K562 (cell line): ENCODE measurements at regions of chr2 and their contacts with region 1.

Region 1: DNA sequence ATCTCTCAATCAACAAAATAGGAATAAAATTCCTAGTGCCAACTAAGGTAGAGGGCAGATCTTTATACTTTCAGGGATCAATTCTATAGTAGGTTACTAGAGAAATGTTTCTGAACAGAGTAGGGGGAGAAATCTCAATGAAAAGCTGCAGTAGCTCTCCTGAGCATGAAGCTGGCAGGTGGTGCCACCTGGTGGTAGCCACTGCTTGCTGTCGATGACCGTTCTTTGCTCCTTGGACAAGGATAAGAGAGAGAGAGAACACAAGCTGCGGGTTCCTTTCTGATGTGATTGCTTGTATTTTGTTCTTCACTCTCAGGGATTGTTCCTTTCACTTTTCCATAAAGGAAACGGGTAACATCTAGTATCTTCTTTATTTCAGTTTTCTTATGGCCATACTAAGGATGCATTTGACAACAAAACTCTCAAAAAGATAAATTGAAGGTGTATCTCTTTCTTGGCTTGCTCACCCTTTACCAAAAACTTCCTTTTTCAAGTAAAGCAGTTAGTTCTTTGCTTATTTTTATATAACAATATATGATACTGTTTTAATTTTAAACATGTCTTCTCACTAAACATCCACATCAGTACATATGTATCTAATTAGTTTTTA is 18.6 kb upstream of the MRPL19 start:
- DNase-seq: peak; percentile 59 to 79 (median 66)
- ATAC-seq: peak; percentile 95
- H3K4me3 ChIP-seq: no peak overlapping the region
- H3K27ac ChIP-seq: no peak overlapping the region
- H3K4me1 ChIP-seq: no peaks in the 10 kb centered on the region
- H3K27me3 ChIP-seq: peaks cover 2 to 11% of the 10 kb centered on the region in 2 experiments; a peak in 3 of 5 replicates
- CTCF ChIP-seq: peak; percentile 82 to 88 (median 84)
- EP300 ChIP-seq: no peak
- POLR2A ChIP-seq: no peak
- RAD21 ChIP-seq: peak; percentile 40 to 73

Region 2: DNA sequence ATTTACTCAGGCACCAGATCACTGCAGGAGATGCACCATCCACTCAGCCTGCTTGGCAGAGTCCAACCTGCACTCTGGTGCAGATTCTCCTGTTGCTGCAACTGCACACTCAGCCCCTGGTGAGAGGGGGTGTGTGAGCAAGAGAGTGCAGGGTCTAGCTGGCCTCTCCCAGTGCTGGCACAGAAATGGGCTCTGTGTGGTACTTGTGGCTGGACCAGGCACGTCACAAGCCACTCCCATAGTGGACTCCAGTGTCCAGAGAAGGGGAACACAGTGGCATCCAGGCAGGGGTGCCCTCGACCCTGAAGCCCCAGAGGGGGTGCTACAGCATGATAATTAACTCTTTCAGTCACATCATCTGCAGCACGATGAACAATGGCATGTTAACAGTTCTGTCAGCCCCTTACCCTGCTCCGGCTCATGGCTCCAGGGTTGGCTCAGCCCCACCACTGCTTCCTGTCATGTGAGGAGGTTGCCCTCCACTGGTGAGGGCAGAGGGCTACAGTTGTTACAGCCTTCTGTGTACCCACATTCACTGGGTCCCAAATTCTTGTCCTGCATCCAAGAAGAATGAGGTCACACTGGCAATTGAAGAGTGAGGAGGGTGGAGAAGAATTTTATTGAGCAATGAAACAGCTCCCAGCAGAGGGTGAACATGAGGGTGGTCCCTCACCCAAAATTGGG is 202.9 kb before region 1 on chr2:
- CTCF ChIA-PET with region 1: no interaction called
- POLR2A ChIA-PET with region 1: no interaction called
- in situ Hi-C with region 1: no loop called
- intact Hi-C with region 1: no loop called
- DNase-seq: peak in 1 of 4 experiments; percentile 1
- ATAC-seq: peak; percentile 35; the same call in 1 of the 3 replicates
- H3K4me3 ChIP-seq: no peak overlapping the region
- H3K27ac ChIP-seq: no peak overlapping the region
- H3K4me1 ChIP-seq: no peaks in the 10 kb centered on the region
- H3K27me3 ChIP-seq: no peaks in the 10 kb centered on the region
- CTCF ChIP-seq: peak in 2 of 3 experiments; percentile 17 to 25; a peak in 1 of 6 replicates
- EP300 ChIP-seq: no peak
- POLR2A ChIP-seq: no peak
- RAD21 ChIP-seq: no peak

Region 3: GRCh38 chr2:75466708-75467311 is 161.2 kb before region 1 on chr2:
- CTCF ChIA-PET with region 1: interaction called, 7 read pairs
- POLR2A ChIA-PET with region 1: no interaction called
- in situ Hi-C with region 1: no loop called
- intact Hi-C with region 1: loop called (anchors 5 kb)
- DNase-seq: peak; percentile 54 to 68 (median 66)
- ATAC-seq: peak; percentile 86
- H3K4me3 ChIP-seq: no peak overlapping the region
- H3K27ac ChIP-seq: no peak overlapping the region
- H3K4me1 ChIP-seq: no peaks in the 10 kb centered on the region
- H3K27me3 ChIP-seq: no peaks in the 10 kb centered on the region
- CTCF ChIP-seq: peak; percentile 56 to 77 (median 74)
- EP300 ChIP-seq: no peak
- POLR2A ChIP-seq: no peak
- RAD21 ChIP-seq: peak in 1 of 2 experiments; percentile 51; a peak in 3 of 4 replicates

Region 4: GRCh38 chr2:75680402-75680801 is 52.4 kb after region 1 on chr2:
- CTCF ChIA-PET with region 1: no interaction called
- POLR2A ChIA-PET with region 1: no interaction called
- in situ Hi-C with region 1: no loop called
- intact Hi-C with region 1: no loop called
- DNase-seq: no peak
- ATAC-seq: no peak
- H3K4me3 ChIP-seq: no peak overlapping the region
- H3K27ac ChIP-seq: no peak overlapping the region
- H3K4me1 ChIP-seq: peaks cover 6 to 15% of the 10 kb centered on the region in 2 experiments; a peak in 4 of 5 replicates
- H3K27me3 ChIP-seq: no peaks in the 10 kb centered on the region
- CTCF ChIP-seq: no peak
- EP300 ChIP-seq: no peak
- POLR2A ChIP-seq: no peak
- RAD21 ChIP-seq: no peak

Region 5: DNA sequence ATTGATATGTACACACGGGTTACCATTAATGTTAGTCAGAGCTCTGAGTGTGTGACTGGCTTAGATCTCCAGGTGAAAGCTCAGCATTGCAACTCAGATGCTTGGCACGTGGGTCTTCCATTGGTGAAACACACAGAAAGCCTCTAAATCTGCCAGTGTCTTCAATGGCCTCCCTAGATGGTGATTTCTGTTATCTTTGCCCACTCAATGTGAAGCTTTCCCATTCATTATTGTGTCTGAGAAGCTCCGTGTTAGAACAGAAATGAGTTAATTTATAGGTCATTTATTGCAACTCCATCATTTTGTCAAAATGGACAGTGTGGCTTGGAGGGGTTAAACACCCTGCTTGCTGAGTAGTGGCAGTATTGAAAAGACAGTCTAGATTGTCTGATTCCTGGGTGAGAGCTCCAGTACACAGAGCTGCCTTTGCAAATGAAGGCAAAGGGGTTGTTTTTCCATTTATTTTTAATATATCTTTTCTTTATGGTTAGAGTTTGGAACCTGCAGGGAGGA is 147.4 kb after region 1 on chr2:
- CTCF ChIA-PET with region 1: no interaction called
- POLR2A ChIA-PET with region 1: no interaction called
- in situ Hi-C with region 1: no loop called
- intact Hi-C with region 1: no loop called
- DNase-seq: no peak
- ATAC-seq: no peak
- H3K4me3 ChIP-seq: no peak overlapping the region
- H3K27ac ChIP-seq: no peak overlapping the region
- H3K4me1 ChIP-seq: no peaks in the 10 kb centered on the region
- H3K27me3 ChIP-seq: no peaks in the 10 kb centered on the region
- CTCF ChIP-seq: no peak
- EP300 ChIP-seq: no peak
- POLR2A ChIP-seq: no peak
- RAD21 ChIP-seq: no peak

Region 6: GRCh38 chr2:76008001-76008702 is 380.2 kb after region 1 on chr2:
- CTCF ChIA-PET with region 1: no interaction called
- POLR2A ChIA-PET with region 1: no interaction called
- in situ Hi-C with region 1: no loop called
- intact Hi-C with region 1: no loop called
- DNase-seq: peak in 1 of 4 experiments; percentile 6
- ATAC-seq: peak; percentile 51; the same call in 1 of the 3 replicates
- H3K4me3 ChIP-seq: no peak overlapping the region
- H3K27ac ChIP-seq: no peak overlapping the region
- H3K4me1 ChIP-seq: no peaks in the 10 kb centered on the region
- H3K27me3 ChIP-seq: no peaks in the 10 kb centered on the region
- CTCF ChIP-seq: no peak
- EP300 ChIP-seq: no peak
- POLR2A ChIP-seq: no peak
- RAD21 ChIP-seq: no peak